Activated B cell treated with CpG ODN at 0.5 μM for 24 hours (primary cell): ENCODE measurements at regions of chr12 and their contacts with region 1.

Region 1: GRCh38 chr12:108562348-108563135 is at the start of gene ISCU:
- DNase-seq: peak; percentile 100
- ATAC-seq: peak; percentile 71
- H3K4me3 Mint-ChIP-seq: peak within 1 kb of the TSS; percentile 100
- H3K27ac Mint-ChIP-seq: peak within 1 kb of the TSS; percentile 99
- H3K4me1 Mint-ChIP-seq: peaks cover 73% of the 10 kb centered on the region
- H3K27me3 Mint-ChIP-seq: no peaks in the 10 kb centered on the region
- CTCF ChIP-seq: no peak
- total RNA-seq, gene ISCU: 114 and 117 TPM in 2 replicates

Region 2: GRCh38 chr12:107685360-107686248 is 876.9 kb before region 1 on chr12 and contains the start of gene PWP1:
- CTCF ChIA-PET with region 1: no interaction called
- POLR2A ChIA-PET with region 1: interaction called, 9 read pairs
- intact Hi-C with region 1: loop called (anchors 1 kb)
- DNase-seq: peak; percentile 93
- ATAC-seq: peak; percentile 90
- H3K4me3 Mint-ChIP-seq: peak within 1 kb of the TSS; percentile 96
- H3K27ac Mint-ChIP-seq: peak within 1 kb of the TSS; percentile 97
- H3K4me1 Mint-ChIP-seq: peaks cover 23% of the 10 kb centered on the region
- H3K27me3 Mint-ChIP-seq: no peaks in the 10 kb centered on the region
- CTCF ChIP-seq: no peak
- total RNA-seq, gene PWP1: 49.4 and 53.5 TPM in 2 replicates

Region 3: DNA sequence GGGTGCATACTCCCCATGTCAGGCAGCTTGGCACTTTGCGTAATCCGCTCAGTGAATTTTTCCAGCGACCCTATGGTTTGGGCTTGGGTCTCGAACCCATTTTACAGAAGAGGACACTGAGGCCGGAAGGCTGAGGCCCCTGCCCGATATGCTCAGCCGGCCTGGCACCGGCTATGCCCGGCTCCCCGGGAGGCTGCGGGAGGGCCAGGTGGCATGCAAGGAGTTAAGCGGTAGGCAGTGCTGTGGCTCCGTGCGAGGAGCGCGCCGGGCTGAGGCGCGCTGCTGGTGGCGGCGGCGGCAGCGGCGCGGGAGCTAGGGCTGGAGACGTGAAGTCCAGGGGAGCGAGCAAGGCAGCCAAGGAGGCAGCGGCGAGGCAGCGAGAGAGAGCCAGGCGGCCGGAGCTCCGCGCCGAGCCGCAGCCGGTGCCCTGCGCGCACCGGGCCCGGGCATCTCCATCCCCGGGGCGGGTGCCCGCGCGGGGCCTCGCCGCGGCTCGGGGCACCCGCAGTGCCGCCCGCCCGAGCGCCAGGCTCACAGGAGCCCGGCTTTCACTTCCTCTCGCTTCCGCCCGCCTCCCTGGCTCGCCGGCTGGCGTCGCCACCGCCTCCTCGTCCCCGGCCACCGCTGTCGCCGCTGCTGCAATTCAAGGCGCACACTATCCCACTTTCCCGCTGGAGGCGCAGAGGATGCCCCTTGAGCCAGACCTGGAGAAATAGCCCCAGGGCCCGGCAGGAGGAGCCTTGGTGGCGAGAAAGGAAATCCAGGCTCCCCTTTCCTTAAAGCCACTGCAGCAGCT is 433.3 kb before region 1 on chr12 and contains the start of gene WSCD2:
- CTCF ChIA-PET with region 1: no interaction called
- POLR2A ChIA-PET with region 1: no interaction called
- intact Hi-C with region 1: no loop called
- DNase-seq: peak; percentile 39
- ATAC-seq: peak; percentile 89
- H3K4me3 Mint-ChIP-seq: peak within 1 kb of the TSS; percentile 77
- H3K27ac Mint-ChIP-seq: no peak within 1 kb of the TSS
- H3K4me1 Mint-ChIP-seq: peaks cover 14% of the 10 kb centered on the region
- H3K27me3 Mint-ChIP-seq: peaks cover 29% of the 10 kb centered on the region
- CTCF ChIP-seq: no peak
- total RNA-seq, gene WSCD2: 1.4 and 1.9 TPM in 2 replicates

Region 4: DNA sequence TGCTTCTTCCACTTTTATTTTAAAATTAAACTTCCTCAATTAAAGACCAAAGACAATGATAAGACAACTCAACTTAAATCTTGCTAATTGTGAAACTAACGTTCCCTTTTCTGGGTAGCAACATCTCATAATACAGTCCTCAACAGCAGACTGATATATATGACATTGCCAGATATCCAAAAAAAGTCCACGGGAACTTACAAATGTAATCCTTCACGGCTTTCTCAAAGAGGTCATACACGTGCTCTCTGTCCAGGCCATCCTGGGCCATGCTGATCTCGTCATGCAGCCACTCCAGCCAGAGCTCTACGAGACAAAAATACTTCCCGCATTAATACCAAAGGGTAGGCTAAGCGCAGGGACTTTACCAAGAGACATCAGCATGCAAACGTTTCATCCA is 14.9 kb before region 1 on chr12:
- CTCF ChIA-PET with region 1: no interaction called
- POLR2A ChIA-PET with region 1: interaction called, 17 read pairs
- intact Hi-C with region 1: no loop called
- DNase-seq: no peak
- ATAC-seq: no peak
- H3K4me3 Mint-ChIP-seq: no peak overlapping the region
- H3K27ac Mint-ChIP-seq: peak overlapping the region; percentile 12
- H3K4me1 Mint-ChIP-seq: peaks cover 31% of the 10 kb centered on the region
- H3K27me3 Mint-ChIP-seq: no peaks in the 10 kb centered on the region
- CTCF ChIP-seq: no peak

Region 5: GRCh38 chr12:108664338-108665258 is 102.1 kb after region 1 on chr12:
- CTCF ChIA-PET with region 1: interaction called, 27 read pairs
- POLR2A ChIA-PET with region 1: interaction called, 11 read pairs
- intact Hi-C with region 1: loop called (anchors 1 kb)
- DNase-seq: peak; percentile 33
- ATAC-seq: peak; percentile 97
- H3K4me3 Mint-ChIP-seq: peak overlapping the region; percentile 36
- H3K27ac Mint-ChIP-seq: peak overlapping the region; percentile 85
- H3K4me1 Mint-ChIP-seq: peaks cover 57% of the 10 kb centered on the region
- H3K27me3 Mint-ChIP-seq: no peaks in the 10 kb centered on the region
- CTCF ChIP-seq: peak; percentile 61

Region 6: GRCh38 chr12:108856428-108857157 is 294.1 kb after region 1 on chr12:
- CTCF ChIA-PET with region 1: no interaction called
- POLR2A ChIA-PET with region 1: interaction called, 12 read pairs
- intact Hi-C with region 1: loop called (anchors 1 kb)
- DNase-seq: no peak
- ATAC-seq: peak; percentile 7
- H3K4me3 Mint-ChIP-seq: peak overlapping the region; percentile 94
- H3K27ac Mint-ChIP-seq: peak overlapping the region; percentile 88
- H3K4me1 Mint-ChIP-seq: peaks cover 59% of the 10 kb centered on the region
- H3K27me3 Mint-ChIP-seq: no peaks in the 10 kb centered on the region
- CTCF ChIP-seq: no peak

Region 7: GRCh38 chr12:109154451-109155438 is 592.2 kb after region 1 on chr12:
- CTCF ChIA-PET with region 1: no interaction called
- POLR2A ChIA-PET with region 1: interaction called, 4 read pairs
- intact Hi-C with region 1: loop called (anchors 5 kb)
- DNase-seq: peak; percentile 76
- ATAC-seq: peak; percentile 97
- H3K4me3 Mint-ChIP-seq: peak overlapping the region; percentile 95
- H3K27ac Mint-ChIP-seq: peak overlapping the region; percentile 90
- H3K4me1 Mint-ChIP-seq: peaks cover 24% of the 10 kb centered on the region
- H3K27me3 Mint-ChIP-seq: peaks cover 12% of the 10 kb centered on the region
- CTCF ChIP-seq: no peak